ENCODE measurements at regions of chr17 and their contacts with region 1.

Region 1: DNA sequence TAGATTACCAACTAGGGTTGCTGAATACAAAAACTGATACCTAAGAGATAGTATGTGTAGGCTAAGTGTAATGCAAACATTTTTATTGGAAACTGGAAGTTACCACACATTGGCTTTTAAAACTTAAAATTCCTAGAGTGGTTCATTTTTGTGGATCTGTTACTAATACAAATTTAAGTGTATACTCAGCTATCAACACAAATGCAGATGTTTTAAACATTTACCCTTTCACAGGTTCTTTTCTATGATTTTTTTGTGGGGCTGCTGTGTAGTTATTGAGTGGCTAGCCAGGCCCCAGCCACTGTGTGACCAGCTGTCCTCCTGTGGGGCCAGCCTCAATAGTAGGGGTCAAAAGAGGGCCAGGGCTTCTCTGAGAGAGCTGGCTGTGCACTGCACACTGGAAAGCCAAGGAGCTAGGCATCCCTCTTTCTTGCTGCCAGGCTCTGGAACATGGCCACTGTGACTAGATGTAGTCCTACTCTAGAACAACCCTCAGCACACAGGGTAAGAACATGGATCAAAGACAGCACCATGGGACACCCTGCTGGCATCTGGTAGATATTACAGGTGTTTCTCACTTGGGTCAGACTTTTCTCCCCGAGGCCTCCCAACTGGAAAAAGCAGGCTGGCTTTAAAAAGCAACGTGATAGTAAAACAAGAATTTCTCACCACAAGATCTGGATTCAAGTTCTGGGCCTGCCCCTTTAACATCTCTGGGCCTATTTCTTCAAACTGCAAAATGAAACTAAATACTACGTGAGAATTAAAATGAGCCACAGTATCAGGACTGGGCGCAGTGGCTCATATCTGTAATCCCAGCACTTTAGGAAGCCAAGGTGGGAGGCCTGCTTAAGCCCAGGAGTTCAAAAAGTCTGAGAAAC is 7.3 kb upstream of the VEZF1 start:
- DNase-seq: peak; percentile 81
- ATAC-seq: peak; percentile 91
- H3K4me3 ChIP-seq: no peak overlapping the region
- H3K27ac ChIP-seq: no peak overlapping the region
- H3K4me1 ChIP-seq: peaks cover 2% of the 10 kb centered on the region; the same call in 1 of the 2 replicates
- H3K27me3 ChIP-seq: no peaks in the 10 kb centered on the region
- CTCF ChIP-seq: peak; percentile 73
- POLR2A ChIP-seq: no peak
- RAD21 ChIP-seq: peak; percentile 90

Region 2: DNA sequence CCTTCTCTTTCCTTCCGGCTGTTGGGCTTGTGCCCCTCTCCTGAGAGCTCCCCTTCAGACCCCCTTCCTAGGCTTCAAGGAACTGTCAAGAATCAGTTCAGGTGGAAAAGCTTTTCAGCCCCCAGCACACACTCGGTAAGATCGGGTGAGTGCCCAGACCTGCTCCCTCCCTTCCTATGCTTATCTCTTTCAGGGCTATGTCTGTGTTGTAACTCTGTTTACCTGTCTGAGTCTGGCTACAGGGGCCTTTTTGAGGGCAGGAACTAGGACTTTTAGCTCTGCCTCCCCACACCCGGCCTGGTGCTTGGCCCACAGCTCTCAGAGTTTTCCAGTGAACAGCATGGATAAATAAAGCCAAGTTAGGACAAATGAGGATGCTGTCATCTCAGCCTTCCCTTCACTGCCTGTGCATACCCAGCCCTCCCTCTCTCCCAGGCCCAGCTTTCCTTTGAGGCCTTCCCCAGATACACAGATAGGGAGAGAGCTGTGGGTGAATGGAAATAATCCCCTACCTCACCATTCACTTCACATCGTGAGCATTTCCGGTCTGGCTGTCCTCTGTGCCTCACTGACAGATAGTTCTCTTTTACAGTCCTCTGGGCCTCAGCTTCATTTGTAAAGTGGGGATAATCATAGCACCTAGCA is 139.8 kb before region 1 on chr17:
- CTCF ChIA-PET with region 1: interaction called, 26 read pairs
- POLR2A ChIA-PET with region 1: interaction called, 7 read pairs
- dilution Hi-C with region 1: loop called (anchors 25 kb)
- in situ Hi-C with region 1: loop called (anchors 5 kb)
- intact Hi-C with region 1: loop called (anchors 1 kb)
- DNase-seq: no peak
- ATAC-seq: no peak
- H3K4me3 ChIP-seq: no peak overlapping the region
- H3K27ac ChIP-seq: no peak overlapping the region
- H3K4me1 ChIP-seq: peaks cover 7% of the 10 kb centered on the region
- H3K27me3 ChIP-seq: no peaks in the 10 kb centered on the region
- CTCF ChIP-seq: no peak
- POLR2A ChIP-seq: no peak
- RAD21 ChIP-seq: no peak

Region 3: DNA sequence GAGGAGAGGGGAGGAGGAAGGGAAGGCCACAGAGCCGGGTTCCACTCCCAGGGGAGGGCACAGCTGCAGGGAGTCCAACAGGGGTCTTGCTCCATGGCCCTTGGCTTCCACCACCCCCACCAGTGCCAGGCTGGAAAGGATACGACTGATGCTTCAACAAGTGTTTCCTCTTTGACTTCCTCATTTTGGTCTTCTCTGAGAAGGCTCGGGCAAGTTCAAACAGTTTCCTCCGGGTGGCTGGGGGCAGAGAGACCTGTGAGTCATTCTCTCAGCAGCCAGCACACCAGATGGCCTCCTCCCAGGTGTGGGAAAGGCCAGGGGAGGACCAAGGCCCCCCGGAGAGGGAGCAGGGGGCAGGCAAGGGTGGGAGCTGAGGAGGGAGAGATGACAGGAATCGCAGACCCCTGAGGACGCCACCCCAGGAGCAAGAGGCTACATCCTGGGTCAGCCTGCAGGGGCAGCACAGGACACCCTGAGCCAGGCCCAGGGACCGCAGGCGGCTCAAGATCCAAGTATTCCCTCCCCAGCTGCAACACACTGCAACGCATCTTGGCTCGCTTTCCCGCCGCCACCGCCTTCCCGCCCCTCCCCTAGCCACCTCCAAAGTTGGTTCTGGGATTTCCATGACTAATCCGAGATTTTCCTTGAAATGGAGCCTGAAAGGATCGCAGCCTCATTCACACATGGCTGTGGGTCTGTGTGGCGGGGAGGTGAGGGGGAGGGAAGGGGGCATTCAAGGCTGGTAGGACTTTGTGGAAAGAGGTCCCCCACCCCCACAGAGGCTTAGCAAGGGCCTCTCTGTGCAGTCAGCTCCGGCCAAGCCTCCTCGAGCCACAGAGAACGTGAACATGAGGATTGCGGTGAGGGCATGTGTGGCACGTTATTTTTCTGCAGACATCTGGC is 127.1 kb before region 1 on chr17:
- CTCF ChIA-PET with region 1: interaction called, 24 read pairs
- POLR2A ChIA-PET with region 1: interaction called, 3 read pairs
- dilution Hi-C with region 1: loop called (anchors 25 kb)
- in situ Hi-C with region 1: no loop called
- intact Hi-C with region 1: no loop called
- DNase-seq: peak; percentile 94
- ATAC-seq: peak; percentile 79
- H3K4me3 ChIP-seq: no peak overlapping the region
- H3K27ac ChIP-seq: peak overlapping the region; percentile 82
- H3K4me1 ChIP-seq: peaks cover 31% of the 10 kb centered on the region
- H3K27me3 ChIP-seq: no peaks in the 10 kb centered on the region
- CTCF ChIP-seq: peak; percentile 48
- POLR2A ChIP-seq: peak; percentile 47; the same call in 1 of the 2 replicates
- RAD21 ChIP-seq: peak; percentile 53